ENCODE measurements at regions of chr1 and their contacts with region 1.

Region 1: GRCh38 chr1:227946624-227947385 is 927 bp downstream of the WNT9A start:
- DNase-seq: peak; percentile 87
- H3K4me3 ChIP-seq: peak overlapping the region; percentile 47
- H3K27ac ChIP-seq: peak overlapping the region; percentile 77
- H3K4me1 ChIP-seq: peaks cover 18% of the 10 kb centered on the region
- H3K27me3 ChIP-seq: peaks cover 10% of the 10 kb centered on the region
- CTCF ChIP-seq: peak; percentile 54

Region 2: DNA sequence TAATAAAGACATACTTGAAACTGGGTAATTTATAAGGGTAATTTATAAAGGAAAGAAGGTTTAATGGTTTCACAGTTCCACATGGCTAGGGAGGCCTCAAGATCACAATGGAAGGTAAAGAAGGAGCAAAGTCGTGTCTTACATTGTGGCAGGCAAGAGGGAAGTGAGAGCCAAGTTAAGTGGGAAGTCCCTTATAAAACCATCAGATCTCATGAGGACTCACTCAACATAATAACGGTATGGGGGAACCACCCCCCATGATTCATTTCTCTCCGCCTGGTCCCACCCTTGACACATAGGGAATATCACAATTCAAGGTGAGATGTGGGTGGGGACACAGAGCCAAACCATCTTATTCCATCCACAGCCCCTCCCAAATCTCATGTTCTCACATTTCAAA is 460.2 kb before region 1 on chr1:
- intact Hi-C with region 1: loop called (anchors 2 kb)
- DNase-seq: no peak
- H3K4me3 ChIP-seq: no peak overlapping the region
- H3K27ac ChIP-seq: no peak overlapping the region
- H3K4me1 ChIP-seq: no peaks in the 10 kb centered on the region
- H3K27me3 ChIP-seq: no peaks in the 10 kb centered on the region
- CTCF ChIP-seq: no peak

Region 3: GRCh38 chr1:227762233-227762911 is 184.4 kb before region 1 on chr1:
- intact Hi-C with region 1: loop called (anchors 2 kb)
- DNase-seq: peak; percentile 88
- H3K4me3 ChIP-seq: no peak overlapping the region
- H3K27ac ChIP-seq: no peak overlapping the region
- H3K4me1 ChIP-seq: peaks cover 12% of the 10 kb centered on the region
- H3K27me3 ChIP-seq: no peaks in the 10 kb centered on the region
- CTCF ChIP-seq: peak; percentile 86